Heart right ventricle (tissue), 16 donors: ENCODE measurements at regions of chr15 and their contacts with region 1.

Region 1: GRCh38 chr15:51071578-51071977 is 23.1 kb downstream of the TNFAIP8L3 start:
- DNase-seq: no peak
- ATAC-seq: no peak
- H3K4me3 ChIP-seq: no peak overlapping the region
- H3K27ac ChIP-seq: no peak overlapping the region
- H3K4me1 ChIP-seq: peaks cover 0 to 24% (median 10%) of the 10 kb centered on the region in 9 donors
- H3K27me3 ChIP-seq: no peaks in the 10 kb centered on the region
- CTCF ChIP-seq: no peak

Region 2: GRCh38 chr15:51051776-51052175 is 19.8 kb before region 1 on chr15:
- intact Hi-C with region 1: loop called in 1 of 10 experiments (anchors 2 kb)
- DNase-seq: peak; percentile 64 to 68
- ATAC-seq: peak; percentile 72 to 93 (median 88)
- H3K4me3 ChIP-seq: no peak overlapping the region
- H3K27ac ChIP-seq: peak overlapping the region in 4 of 10 donors; percentile 28 to 48 (median 48)
- H3K4me1 ChIP-seq: peaks cover 13 to 45% (median 33%) of the 10 kb centered on the region in 9 donors
- H3K27me3 ChIP-seq: no peaks in the 10 kb centered on the region
- CTCF ChIP-seq: no peak